H1 (cell line): ENCODE measurements at regions of chr9 and their contacts with region 1.

Region 1: GRCh38 chr9:114538241-114538640 is 33.0 kb upstream of the WHRN start:
- DNase-seq: peak in 1 of 2 experiments; percentile 23
- H3K4me3 ChIP-seq: no peak overlapping the region
- H3K27ac ChIP-seq: no peak overlapping the region
- H3K4me1 ChIP-seq: no peaks in the 10 kb centered on the region
- H3K27me3 ChIP-seq: no peaks in the 10 kb centered on the region
- CTCF ChIP-seq: peak; percentile 47 to 66 (median 51)
- EP300 ChIP-seq: no peak
- POLR2A ChIP-seq: no peak
- RAD21 ChIP-seq: peak; percentile 64 to 68

Region 2: GRCh38 chr9:114413861-114414301 is 124.4 kb before region 1 on chr9:
- CTCF ChIA-PET with region 1: no interaction called
- POLR2A ChIA-PET with region 1: no interaction called
- DNase-seq: no peak
- H3K4me3 ChIP-seq: no peak overlapping the region
- H3K27ac ChIP-seq: no peak overlapping the region
- H3K4me1 ChIP-seq: peaks cover 5 to 12% (median 7%) of the 10 kb centered on the region in 4 experiments
- H3K27me3 ChIP-seq: no peaks in the 10 kb centered on the region
- CTCF ChIP-seq: no peak
- EP300 ChIP-seq: no peak
- POLR2A ChIP-seq: no peak
- RAD21 ChIP-seq: no peak

Region 3: GRCh38 chr9:114551883-114552685 is 13.8 kb after region 1 on chr9:
- CTCF ChIA-PET with region 1: interaction called, 30 read pairs
- POLR2A ChIA-PET with region 1: interaction called, 5 read pairs
- DNase-seq: peak in 1 of 2 experiments; percentile 19
- H3K4me3 ChIP-seq: no peak overlapping the region
- H3K27ac ChIP-seq: no peak overlapping the region
- H3K4me1 ChIP-seq: no peaks in the 10 kb centered on the region
- H3K27me3 ChIP-seq: 0 out of 7 replicates have a peak, but pooled peaks cover 0 to 3% (median 0%) of the 10 kb centered on the region in 4 experiments
- CTCF ChIP-seq: no peak
- EP300 ChIP-seq: no peak
- POLR2A ChIP-seq: no peak
- RAD21 ChIP-seq: no peak